ENCODE measurements at regions of chr7 and their contacts with region 1.

Region 1: DNA sequence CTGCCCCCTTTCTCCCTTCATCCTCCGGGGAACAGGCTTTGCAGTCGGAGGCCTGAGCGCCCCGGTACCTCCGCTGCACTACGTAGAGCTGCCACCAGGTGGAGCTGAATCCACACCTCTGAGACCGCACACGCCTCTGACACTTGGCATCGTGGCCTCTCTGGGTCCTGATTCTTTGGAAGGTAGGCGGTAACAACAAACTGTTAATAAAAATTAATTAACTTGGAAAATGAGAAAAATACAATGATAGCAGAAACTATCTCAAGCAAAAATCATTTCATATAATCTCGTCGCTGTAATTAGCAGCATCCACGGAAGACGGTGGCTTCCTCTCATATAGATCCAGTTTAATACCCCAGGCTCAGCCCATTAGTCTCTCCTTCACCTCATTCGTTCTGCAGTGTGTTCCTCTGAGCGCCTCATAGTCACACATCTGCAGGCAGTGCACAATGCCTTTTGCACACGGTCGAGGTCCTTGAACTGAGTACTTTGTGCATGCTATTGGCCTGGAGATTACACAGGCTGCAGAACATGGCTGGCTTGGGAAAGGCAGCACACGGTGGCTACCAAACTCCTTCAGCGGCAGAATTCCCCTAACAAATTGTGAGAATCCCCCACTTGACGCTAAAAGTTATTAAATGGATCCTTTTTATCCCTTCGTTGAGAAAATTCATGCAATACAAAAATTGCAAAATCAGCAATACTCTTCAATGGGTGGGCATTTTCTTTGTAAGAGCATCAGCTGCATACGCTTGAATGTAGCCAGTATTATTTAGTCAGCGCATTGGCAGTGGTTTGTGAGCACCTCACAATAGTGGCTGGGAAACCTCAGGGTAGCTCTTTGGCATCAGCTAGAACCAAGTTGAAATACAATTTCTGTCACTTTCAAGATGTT is 18.7 kb downstream of the OR9A2 start:
- DNase-seq: peak; percentile 89
- ATAC-seq: peak; percentile 91
- H3K4me3 Mint-ChIP-seq: no peak overlapping the region
- H3K27ac Mint-ChIP-seq: no peak overlapping the region
- H3K4me1 Mint-ChIP-seq: peaks cover 3% of the 10 kb centered on the region
- H3K27me3 Mint-ChIP-seq: peaks cover 4% of the 10 kb centered on the region

Region 2: GRCh38 chr7:142301923-142302550 is 706.2 kb before region 1 on chr7:
- CTCF ChIA-PET with region 1: interaction called, 12 read pairs
- POLR2A ChIA-PET with region 1: no interaction called
- intact Hi-C with region 1: loop called in 1 of 2 experiments (anchors 5 kb)
- DNase-seq: no peak
- ATAC-seq: no peak
- H3K4me3 Mint-ChIP-seq: no peak overlapping the region
- H3K27ac Mint-ChIP-seq: no peak overlapping the region
- H3K4me1 Mint-ChIP-seq: peaks cover 29% of the 10 kb centered on the region
- H3K27me3 Mint-ChIP-seq: peaks cover 8% of the 10 kb centered on the region

Region 3: GRCh38 chr7:142603870-142604448 is 404.3 kb before region 1 on chr7:
- CTCF ChIA-PET with region 1: interaction called, 12 read pairs
- POLR2A ChIA-PET with region 1: no interaction called
- intact Hi-C with region 1: loop called (anchors 1 to 2 kb)
- DNase-seq: peak; percentile 69
- ATAC-seq: peak; percentile 60
- H3K4me3 Mint-ChIP-seq: peak overlapping the region; percentile 31
- H3K27ac Mint-ChIP-seq: peak overlapping the region; percentile 67
- H3K4me1 Mint-ChIP-seq: peaks cover 23% of the 10 kb centered on the region
- H3K27me3 Mint-ChIP-seq: peaks cover 3% of the 10 kb centered on the region

Region 4: DNA sequence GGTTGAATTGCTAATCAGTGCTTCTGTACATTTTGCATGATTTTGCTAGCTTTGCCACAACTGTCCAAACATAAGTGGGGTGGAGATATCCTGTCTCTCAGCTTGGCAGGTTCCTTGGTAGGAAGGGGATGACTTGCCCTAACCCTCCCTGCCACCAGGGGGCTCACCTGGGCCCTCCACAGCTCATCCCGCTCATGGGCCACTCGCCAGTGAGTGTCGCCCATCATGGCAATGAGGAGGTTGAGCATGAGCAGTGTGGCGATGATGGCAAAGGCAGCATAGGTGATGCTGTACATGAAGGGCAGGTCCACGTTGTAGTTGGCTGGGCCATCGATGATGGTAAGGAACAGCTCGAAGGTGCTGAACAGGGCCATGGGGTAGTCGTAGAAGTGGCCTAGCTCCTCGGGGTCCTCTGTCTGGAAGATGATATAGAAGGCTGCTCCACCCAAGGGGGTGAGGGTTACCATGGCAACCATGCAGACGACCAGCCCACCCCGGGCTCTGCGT is 134.9 kb before region 1 on chr7:
- CTCF ChIA-PET with region 1: interaction called, 25 read pairs
- POLR2A ChIA-PET with region 1: no interaction called
- intact Hi-C with region 1: no loop called
- DNase-seq: peak; percentile 68
- ATAC-seq: peak; percentile 77
- H3K4me3 Mint-ChIP-seq: no peak overlapping the region
- H3K27ac Mint-ChIP-seq: no peak overlapping the region
- H3K4me1 Mint-ChIP-seq: no peaks in the 10 kb centered on the region
- H3K27me3 Mint-ChIP-seq: no peaks in the 10 kb centered on the region

Region 5: DNA sequence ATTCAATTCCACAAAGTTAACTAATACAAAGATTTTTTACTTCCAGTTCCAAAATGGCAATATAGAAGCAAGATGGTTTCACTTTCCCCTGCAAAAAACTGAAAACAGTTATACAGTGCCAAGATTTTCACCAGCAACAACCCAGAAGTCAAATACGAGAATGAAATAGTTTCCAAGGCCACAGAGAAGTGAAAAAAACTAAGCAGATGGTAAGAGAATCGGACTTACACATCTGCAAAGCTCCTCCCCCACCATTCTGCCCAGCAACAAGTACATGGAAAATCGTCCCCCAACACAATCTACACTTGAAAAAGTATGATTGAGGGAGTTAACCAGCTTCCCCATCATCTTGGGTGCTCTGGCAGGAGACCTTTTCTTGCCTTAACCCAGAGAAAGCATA is 15.8 kb before region 1 on chr7:
- CTCF ChIA-PET with region 1: interaction called, 11 read pairs
- POLR2A ChIA-PET with region 1: no interaction called
- intact Hi-C with region 1: no loop called
- DNase-seq: no peak
- ATAC-seq: no peak
- H3K4me3 Mint-ChIP-seq: no peak overlapping the region
- H3K27ac Mint-ChIP-seq: no peak overlapping the region
- H3K4me1 Mint-ChIP-seq: no peaks in the 10 kb centered on the region
- H3K27me3 Mint-ChIP-seq: peaks cover 10% of the 10 kb centered on the region

Measured in activated CD4-positive, alpha-beta T cell treated with anti-CD3 and anti-CD28 coated beads for 36 hours (primary cell).